ENCODE measurements at regions of chr13 and their contacts with region 1.

Region 1: GRCh38 chr13:36981156-36981743 is 17.9 kb downstream of the ALG5 start:
- DNase-seq: no peak

Region 2: GRCh38 chr13:36420437-36420891 is 560.8 kb before region 1 on chr13:
- intact Hi-C with region 1: loop called (anchors 5 kb)
- DNase-seq: peak; percentile 37 to 94 (median 74)

Region 3: DNA sequence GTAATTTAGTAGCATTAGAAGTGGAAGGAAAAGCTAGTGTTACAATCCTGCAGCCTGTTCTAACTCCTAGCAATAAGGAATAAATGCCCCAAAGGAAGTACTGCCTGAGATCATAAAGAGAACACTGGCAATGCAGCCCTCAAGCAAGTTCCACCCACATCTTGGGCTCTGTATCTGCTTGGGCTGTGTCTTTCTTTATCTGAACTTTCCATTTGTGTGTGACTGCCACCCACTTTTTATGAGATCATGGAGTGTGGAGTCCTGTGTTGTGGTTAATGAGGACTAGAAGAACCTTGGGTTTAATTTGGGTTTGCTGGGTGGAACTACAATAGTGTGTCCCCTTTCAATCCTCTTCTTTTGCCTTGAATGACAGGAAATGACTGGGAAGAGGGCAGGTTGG is 124.0 kb before region 1 on chr13:
- intact Hi-C with region 1: loop called (anchors 2 kb)
- DNase-seq: no peak

Measured in posterior cingulate gyrus (tissue), 11 donors.